Activated naive CD4-positive, alpha-beta T cell treated with anti-CD3 and anti-CD28 coated beads for 36 hours (primary cell): ENCODE measurements at regions of chr6 and their contacts with region 1.

Region 1: DNA sequence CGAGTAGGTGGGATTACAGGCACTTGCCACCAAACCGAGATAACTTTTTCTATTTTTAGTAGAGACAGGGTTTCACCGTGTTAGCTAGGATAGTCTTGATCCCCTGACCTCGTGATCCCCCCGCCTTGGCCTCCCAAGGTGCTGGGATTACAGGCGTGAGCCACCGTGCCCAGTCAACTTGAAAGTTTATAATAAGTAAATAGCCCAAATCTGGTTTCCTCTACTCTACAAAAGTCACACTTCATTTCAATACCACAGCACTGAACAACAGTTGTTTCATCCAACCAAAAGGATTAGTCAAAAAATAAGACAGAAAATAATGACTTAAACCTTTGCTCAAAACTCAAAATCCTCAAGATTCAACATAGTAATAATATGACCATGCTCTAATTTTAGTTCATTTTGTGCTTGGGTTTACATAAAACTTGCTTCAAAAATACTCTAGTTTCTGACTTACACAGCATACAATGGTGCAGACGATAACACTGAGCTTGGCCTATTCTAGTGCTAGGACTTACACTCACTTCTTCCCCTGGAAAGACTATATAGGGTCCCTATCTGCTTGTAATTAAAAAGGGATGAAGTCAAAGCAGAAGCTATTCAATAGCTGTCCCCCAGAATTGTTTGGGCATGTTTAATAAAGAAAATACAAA is 56.7 kb downstream of the NT5E start:
- DNase-seq: no peak
- H3K4me3 Mint-ChIP-seq: no peak overlapping the region
- H3K27ac Mint-ChIP-seq: no peak overlapping the region
- H3K4me1 Mint-ChIP-seq: peaks cover 3% of the 10 kb centered on the region
- H3K27me3 Mint-ChIP-seq: no peaks in the 10 kb centered on the region

Region 2: GRCh38 chr6:84141521-84141920 is 1365.0 kb before region 1 on chr6:
- CTCF ChIA-PET with region 1: no interaction called
- intact Hi-C with region 1: loop called (anchors 10 kb)
- DNase-seq: no peak
- H3K4me3 Mint-ChIP-seq: no peak overlapping the region
- H3K27ac Mint-ChIP-seq: no peak overlapping the region
- H3K4me1 Mint-ChIP-seq: no peaks in the 10 kb centered on the region
- H3K27me3 Mint-ChIP-seq: no peaks in the 10 kb centered on the region

Region 3: DNA sequence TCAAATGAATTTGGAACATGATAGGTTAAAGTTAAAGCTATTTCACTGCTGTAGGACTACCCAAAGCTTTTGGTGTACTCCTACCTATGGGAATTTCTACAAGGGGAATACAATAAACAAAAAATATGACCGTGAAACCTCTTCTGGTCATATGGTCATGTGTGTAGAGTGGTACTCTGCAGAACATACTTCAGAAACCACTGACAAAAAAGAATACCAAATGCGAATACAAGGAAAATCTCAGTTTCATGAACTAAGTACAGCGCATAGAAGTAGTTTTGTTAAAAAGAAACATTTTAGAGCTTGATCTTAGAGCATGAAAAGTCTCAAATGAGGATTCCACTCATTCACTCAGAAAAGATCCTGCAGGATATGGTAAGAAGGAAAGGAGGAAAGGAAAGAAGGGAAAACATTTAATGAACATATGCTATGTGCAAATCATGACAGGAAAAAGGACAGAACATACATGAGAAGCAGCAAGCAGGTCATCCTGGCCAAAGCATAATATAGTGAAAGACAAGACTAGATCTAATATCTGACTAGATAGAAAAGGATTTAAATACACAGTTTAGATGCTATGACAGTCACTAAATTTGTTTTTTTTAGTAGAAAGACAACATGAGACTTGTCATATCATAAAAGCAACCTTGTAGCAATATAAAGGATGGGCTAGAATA is 50.6 kb after region 1 on chr6:
- CTCF ChIA-PET with region 1: no interaction called
- intact Hi-C with region 1: no loop called
- DNase-seq: no peak
- H3K4me3 Mint-ChIP-seq: no peak overlapping the region
- H3K27ac Mint-ChIP-seq: no peak overlapping the region
- H3K4me1 Mint-ChIP-seq: no peaks in the 10 kb centered on the region
- H3K27me3 Mint-ChIP-seq: no peaks in the 10 kb centered on the region

Region 4: GRCh38 chr6:85797993-85798392 is 291.4 kb after region 1 on chr6:
- CTCF ChIA-PET with region 1: no interaction called
- intact Hi-C with region 1: no loop called
- DNase-seq: no peak
- H3K4me3 Mint-ChIP-seq: no peak overlapping the region
- H3K27ac Mint-ChIP-seq: no peak overlapping the region
- H3K4me1 Mint-ChIP-seq: no peaks in the 10 kb centered on the region
- H3K27me3 Mint-ChIP-seq: peaks cover 5% of the 10 kb centered on the region